Activated CD4-positive, alpha-beta T cell treated with anti-CD3 and anti-CD28 coated beads for 36 hours (primary cell): ENCODE measurements at regions of chr1 and their contacts with region 1.

Region 1: GRCh38 chr1:180631766-180632325 is at the start of gene XPR1:
- DNase-seq: peak; percentile 99
- ATAC-seq: peak; percentile 99
- H3K4me3 Mint-ChIP-seq: no peak within 1 kb of the TSS
- H3K27ac Mint-ChIP-seq: peak within 1 kb of the TSS; percentile 76
- H3K4me1 Mint-ChIP-seq: peaks cover 9% of the 10 kb centered on the region
- H3K27me3 Mint-ChIP-seq: peaks cover 3% of the 10 kb centered on the region
- total RNA-seq, gene XPR1: 18.4 to 25.2 TPM

Region 2: GRCh38 chr1:179954493-179955297 is 677.2 kb before region 1 on chr1 and contains the start of gene CEP350:
- CTCF ChIA-PET with region 1: no interaction called
- POLR2A ChIA-PET with region 1: no interaction called
- intact Hi-C with region 1: loop called in 1 of 2 experiments (anchors 10 kb)
- DNase-seq: peak; percentile 99
- ATAC-seq: peak; percentile 94
- H3K4me3 Mint-ChIP-seq: peak within 1 kb of the TSS; percentile 82
- H3K27ac Mint-ChIP-seq: peak within 1 kb of the TSS; percentile 98
- H3K4me1 Mint-ChIP-seq: peaks cover 47% of the 10 kb centered on the region
- H3K27me3 Mint-ChIP-seq: no peaks in the 10 kb centered on the region
- total RNA-seq, gene CEP350: 38.2 to 42.1 TPM

Region 3: DNA sequence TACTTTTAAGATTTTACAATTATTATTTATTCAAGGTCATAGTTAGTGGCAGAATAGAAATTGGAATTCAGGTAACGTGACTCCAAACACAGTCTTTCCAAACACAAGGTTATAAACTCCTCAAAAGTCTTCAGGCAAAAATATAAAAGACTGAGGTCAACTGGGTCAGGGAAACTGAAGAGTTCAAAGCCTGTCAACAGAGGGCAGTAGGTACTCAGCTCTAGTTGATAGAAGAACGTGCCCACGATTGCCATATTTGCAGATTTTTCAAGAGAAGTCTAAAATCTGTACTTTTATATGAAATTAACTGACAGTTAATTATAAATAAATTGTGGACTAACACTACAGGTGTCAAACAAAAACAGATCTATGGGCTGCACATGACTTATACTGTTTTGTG is 266.8 kb before region 1 on chr1:
- CTCF ChIA-PET with region 1: no interaction called
- POLR2A ChIA-PET with region 1: no interaction called
- intact Hi-C with region 1: no loop called
- DNase-seq: no peak
- ATAC-seq: no peak
- H3K4me3 Mint-ChIP-seq: no peak overlapping the region
- H3K27ac Mint-ChIP-seq: no peak overlapping the region
- H3K4me1 Mint-ChIP-seq: peaks cover 3% of the 10 kb centered on the region
- H3K27me3 Mint-ChIP-seq: no peaks in the 10 kb centered on the region

Region 4: DNA sequence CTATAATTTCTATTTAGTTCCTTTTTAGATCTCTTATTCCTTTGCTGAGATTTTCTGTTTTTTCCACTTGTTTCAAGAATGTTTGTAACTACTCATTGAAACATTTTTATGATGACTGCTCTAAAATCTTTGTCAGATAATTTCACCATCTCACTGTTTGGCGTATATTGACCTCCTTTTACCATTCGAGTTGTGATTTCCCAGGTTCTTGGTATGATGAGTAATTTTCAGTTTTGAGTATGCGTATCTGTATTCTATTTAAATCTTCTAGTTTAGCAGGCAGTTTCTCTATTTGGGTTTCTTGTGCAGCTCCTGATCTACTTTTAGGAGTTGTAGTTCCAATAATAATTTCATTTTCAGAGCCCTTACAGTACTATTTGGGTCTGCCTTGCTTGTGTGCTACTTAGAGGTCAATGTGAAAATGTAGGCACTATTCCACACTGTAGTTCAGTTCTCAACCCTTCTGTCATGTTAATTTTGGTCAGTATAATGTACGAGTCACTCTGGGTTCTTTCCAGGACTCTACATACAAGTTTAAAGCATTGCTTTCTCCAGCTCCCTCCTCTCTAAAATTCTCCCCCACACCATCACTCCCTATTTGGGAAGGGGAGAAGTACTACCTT is 245.0 kb before region 1 on chr1:
- CTCF ChIA-PET with region 1: no interaction called
- POLR2A ChIA-PET with region 1: no interaction called
- intact Hi-C with region 1: no loop called
- DNase-seq: no peak
- ATAC-seq: peak; percentile 47
- H3K4me3 Mint-ChIP-seq: no peak overlapping the region
- H3K27ac Mint-ChIP-seq: no peak overlapping the region
- H3K4me1 Mint-ChIP-seq: peaks cover 19% of the 10 kb centered on the region
- H3K27me3 Mint-ChIP-seq: no peaks in the 10 kb centered on the region

Region 5: GRCh38 chr1:180502360-180503273 is 129.2 kb before region 1 on chr1 and contains the start of gene ACBD6:
- CTCF ChIA-PET with region 1: no interaction called
- POLR2A ChIA-PET with region 1: interaction called, 4 read pairs
- intact Hi-C with region 1: loop called (anchors 1 to 10 kb)
- DNase-seq: peak; percentile 94
- ATAC-seq: peak; percentile 95
- H3K4me3 Mint-ChIP-seq: peak within 1 kb of the TSS; percentile 96
- H3K27ac Mint-ChIP-seq: peak within 1 kb of the TSS; percentile 97
- H3K4me1 Mint-ChIP-seq: peaks cover 33% of the 10 kb centered on the region
- H3K27me3 Mint-ChIP-seq: no peaks in the 10 kb centered on the region
- total RNA-seq, gene ACBD6: 45.6 to 46.8 TPM

Region 6: DNA sequence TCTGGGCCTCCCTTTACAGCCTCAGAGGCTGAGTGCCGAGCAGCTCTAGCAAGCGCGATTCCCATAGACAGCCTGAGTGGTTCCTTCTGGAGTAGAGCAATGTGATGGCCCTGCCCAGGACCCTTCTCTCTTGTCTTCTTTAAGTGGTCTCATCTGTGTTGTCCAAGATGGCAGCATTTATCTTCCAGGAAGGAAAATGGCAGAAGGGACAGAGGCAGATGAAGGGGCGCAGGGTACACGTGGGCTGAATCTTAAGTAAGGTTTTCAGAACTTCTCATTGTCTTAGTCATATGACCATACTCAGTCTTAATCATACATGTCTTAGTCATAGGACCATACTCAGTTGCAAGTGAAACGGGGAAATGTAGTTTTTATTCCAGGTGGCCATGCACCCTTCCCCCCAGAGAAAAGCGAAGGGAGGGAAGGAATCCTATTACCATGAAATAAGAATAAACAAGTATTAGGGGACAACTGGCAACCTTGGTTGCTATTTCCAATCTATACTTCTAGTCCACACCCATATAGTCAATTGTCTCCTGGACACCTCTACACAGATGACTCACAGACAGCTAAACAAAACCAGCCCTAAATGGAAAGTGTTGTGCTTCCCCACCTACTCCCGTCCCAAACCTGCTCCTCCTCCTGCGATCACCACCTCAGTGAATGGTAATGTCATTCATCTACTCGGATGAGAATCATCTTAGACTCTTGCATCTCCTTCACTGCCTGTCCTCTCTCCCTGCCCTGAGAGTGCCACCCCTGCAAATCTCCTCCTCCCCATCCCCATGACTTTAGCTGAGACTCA is 59.8 kb before region 1 on chr1:
- CTCF ChIA-PET with region 1: no interaction called
- POLR2A ChIA-PET with region 1: no interaction called
- intact Hi-C with region 1: loop called in 1 of 2 experiments (anchors 1 kb)
- DNase-seq: peak; percentile 78
- ATAC-seq: peak; percentile 93
- H3K4me3 Mint-ChIP-seq: no peak overlapping the region
- H3K27ac Mint-ChIP-seq: peak overlapping the region; percentile 71
- H3K4me1 Mint-ChIP-seq: peaks cover 23% of the 10 kb centered on the region
- H3K27me3 Mint-ChIP-seq: peaks cover 12% of the 10 kb centered on the region

Region 7: DNA sequence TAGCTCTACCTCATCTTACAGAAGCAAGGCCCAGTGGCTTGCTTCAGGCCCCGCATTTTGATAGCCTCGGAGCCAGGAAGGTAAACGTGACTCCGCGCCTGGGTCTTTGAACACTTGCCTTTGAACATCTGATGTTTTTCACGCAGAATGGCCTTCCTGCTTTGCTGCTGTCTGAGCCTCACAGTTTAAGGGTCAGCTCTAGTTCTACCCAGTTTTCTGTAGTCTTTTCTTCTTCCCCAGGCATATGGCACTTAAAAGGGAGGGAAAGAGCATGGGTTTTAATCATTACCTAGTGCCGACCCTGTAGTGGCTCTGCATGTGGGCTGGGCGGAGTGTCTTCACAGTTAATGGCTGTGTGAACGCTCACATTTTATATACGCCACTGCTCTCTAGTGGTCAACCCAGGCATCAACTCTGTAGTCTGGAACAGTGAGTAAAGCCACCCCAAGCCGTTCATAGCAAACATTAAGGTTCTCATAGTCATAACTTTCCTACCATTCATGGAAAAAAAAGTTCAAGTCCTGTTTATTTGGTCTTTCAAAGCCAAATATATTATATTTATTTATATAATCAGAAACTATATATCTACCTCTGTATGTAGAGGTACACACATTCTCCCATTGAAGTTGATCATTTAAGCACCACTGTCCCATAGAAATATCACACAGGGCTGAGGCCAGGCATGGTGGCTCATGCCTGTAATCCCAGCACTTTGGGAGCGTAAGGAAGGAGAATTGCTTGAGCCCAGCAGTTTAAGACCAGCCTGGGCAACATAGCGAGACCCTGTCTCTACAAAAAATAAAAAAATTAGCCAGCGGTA is 534.7 kb after region 1 on chr1:
- CTCF ChIA-PET with region 1: interaction called, 3 read pairs
- POLR2A ChIA-PET with region 1: no interaction called
- intact Hi-C with region 1: loop called in 1 of 2 experiments (anchors 5 kb)
- DNase-seq: peak; percentile 84
- ATAC-seq: peak; percentile 100
- H3K4me3 Mint-ChIP-seq: no peak overlapping the region
- H3K27ac Mint-ChIP-seq: peak overlapping the region; percentile 68
- H3K4me1 Mint-ChIP-seq: peaks cover 4% of the 10 kb centered on the region
- H3K27me3 Mint-ChIP-seq: no peaks in the 10 kb centered on the region

Region 8: GRCh38 chr1:181452754-181453153 is 820.9 kb after region 1 on chr1:
- CTCF ChIA-PET with region 1: no interaction called
- POLR2A ChIA-PET with region 1: no interaction called
- intact Hi-C with region 1: no loop called
- DNase-seq: no peak
- ATAC-seq: no peak
- H3K4me3 Mint-ChIP-seq: no peak overlapping the region
- H3K27ac Mint-ChIP-seq: no peak overlapping the region
- H3K4me1 Mint-ChIP-seq: no peaks in the 10 kb centered on the region
- H3K27me3 Mint-ChIP-seq: peaks cover 7% of the 10 kb centered on the region